ENCODE measurements at regions of chr12 and their contacts with region 1.

Region 1: GRCh38 chr12:55194382-55194781 is 26.4 kb upstream of the OR10A7 start:
- DNase-seq: no peak
- ATAC-seq: no peak
- H3K4me3 ChIP-seq: no peak overlapping the region
- H3K4me3 Mint-ChIP-seq: no peak overlapping the region
- H3K27ac ChIP-seq: no peak overlapping the region
- H3K27ac Mint-ChIP-seq: no peak overlapping the region
- H3K4me1 ChIP-seq: no peaks in the 10 kb centered on the region
- H3K4me1 Mint-ChIP-seq: no peaks in the 10 kb centered on the region
- H3K27me3 ChIP-seq: no peaks in the 10 kb centered on the region
- H3K27me3 Mint-ChIP-seq: peaks cover 41% of the 10 kb centered on the region
- CTCF ChIP-seq: no peak

Region 2: DNA sequence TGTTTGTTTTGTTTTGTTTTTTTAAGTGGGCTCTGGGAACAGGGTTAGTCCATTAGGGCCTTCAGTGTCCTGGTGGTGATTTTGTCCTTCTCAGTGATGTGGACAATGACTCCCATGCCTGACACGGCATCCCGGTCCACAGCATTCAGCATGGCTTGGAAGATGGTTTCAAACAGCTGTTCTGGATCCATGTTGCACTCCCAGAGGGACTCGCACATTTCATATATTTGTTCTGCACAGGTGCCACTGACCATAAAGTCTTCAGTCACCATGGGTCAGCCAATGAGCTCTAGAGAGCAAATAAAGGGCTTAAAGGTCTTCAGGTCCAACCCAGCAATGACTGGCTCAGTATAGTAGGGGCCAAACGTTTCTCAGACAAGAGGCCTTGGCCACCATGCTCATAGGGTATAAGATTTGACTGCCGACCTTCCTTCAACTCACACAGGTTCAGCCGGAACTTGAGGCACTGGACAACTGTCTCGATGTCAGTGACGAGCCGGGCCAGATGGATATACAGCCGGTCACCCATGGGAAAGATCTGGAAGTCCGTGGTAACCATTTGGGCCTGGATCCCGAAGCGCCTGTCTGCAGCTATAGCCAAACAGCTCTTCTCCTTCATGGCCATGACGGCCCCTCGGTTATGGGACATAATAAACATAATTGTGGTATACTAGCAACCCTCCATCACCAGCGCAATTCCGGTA is 460.3 kb after region 1 on chr12:
- CTCF ChIA-PET with region 1: interaction called, 12 read pairs
- POLR2A ChIA-PET with region 1: no interaction called
- intact Hi-C with region 1: loop called in 1 of 2 experiments (anchors 1 kb)
- DNase-seq: no peak
- ATAC-seq: no peak
- H3K4me3 ChIP-seq: no peak overlapping the region
- H3K4me3 Mint-ChIP-seq: no peak overlapping the region
- H3K27ac ChIP-seq: no peak overlapping the region
- H3K27ac Mint-ChIP-seq: no peak overlapping the region
- H3K4me1 ChIP-seq: no peaks in the 10 kb centered on the region
- H3K4me1 Mint-ChIP-seq: peaks cover 11% of the 10 kb centered on the region
- H3K27me3 ChIP-seq: no peaks in the 10 kb centered on the region
- H3K27me3 Mint-ChIP-seq: no peaks in the 10 kb centered on the region
- CTCF ChIP-seq: no peak